ENCODE measurements at regions of chr11 and their contacts with region 1.

Region 1: DNA sequence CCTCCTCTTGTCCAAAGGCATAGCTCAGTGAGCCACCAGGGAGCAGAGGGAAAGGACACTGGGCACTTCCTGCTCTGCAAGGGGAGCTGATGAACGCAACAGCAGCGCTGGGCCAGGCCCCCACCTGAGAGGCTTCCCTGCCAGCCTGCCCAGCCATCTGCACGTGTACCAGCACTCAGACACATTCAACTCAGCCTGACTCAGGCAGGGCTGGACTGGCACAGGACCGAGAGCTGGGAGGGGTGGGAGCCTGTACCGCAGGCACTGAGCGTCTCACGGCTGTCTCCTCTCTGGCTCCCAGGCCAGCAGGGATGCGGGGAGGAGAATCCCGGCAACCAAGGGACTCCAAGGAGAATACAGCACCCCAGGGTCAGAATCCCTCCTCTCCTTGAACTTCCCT is 411.8 kb downstream of the CTTN start:
- DNase-seq: no peak
- ATAC-seq: no peak
- H3K4me3 ChIP-seq: no peak overlapping the region
- H3K4me3 Mint-ChIP-seq: no peak overlapping the region
- H3K27ac ChIP-seq: no peak overlapping the region
- H3K27ac Mint-ChIP-seq: no peak overlapping the region
- H3K4me1 ChIP-seq: no peaks in the 10 kb centered on the region
- H3K4me1 Mint-ChIP-seq: no peaks in the 10 kb centered on the region
- H3K27me3 ChIP-seq: no peaks in the 10 kb centered on the region
- H3K27me3 Mint-ChIP-seq: peaks cover 0 to 4% (median 0%) of the 10 kb centered on the region in 5 donors

Region 2: DNA sequence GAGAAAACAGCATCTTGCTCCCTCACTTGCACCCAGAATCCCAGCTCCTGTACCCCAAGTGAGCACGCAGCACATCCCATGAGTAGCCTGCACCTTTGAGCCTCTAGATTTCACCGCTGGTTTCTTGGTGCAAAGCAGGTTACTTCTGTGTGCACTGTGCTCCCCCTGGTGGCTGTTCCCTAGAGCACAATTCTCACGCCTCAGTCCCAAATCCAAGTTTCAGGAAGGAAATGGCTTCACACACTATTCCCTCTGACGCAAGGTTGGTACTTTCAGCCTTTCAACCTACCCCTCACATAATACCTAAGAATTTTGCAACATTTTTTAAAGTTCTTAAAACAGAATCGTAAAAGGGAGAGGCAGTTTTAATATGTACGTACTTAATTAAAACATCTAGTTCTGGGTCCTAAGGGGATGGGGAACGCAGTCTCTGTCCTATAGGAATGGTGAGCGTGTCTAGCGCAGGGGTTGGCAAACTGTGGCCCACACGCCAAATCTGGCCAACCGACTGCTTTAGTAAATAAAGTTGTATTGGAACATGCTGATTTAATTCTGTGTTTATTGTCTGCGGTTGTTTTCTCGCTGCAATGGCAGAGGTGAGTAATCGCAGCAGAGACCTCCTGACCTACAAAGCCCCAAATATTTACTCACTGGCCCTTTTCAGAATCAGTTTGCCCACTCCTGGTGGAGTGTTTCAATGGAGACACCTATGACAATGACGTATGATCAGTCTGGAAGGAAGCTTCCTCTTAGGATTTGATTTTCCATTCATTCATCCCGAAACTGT is 610.5 kb after region 1 on chr11:
- CTCF ChIA-PET with region 1: no interaction called
- POLR2A ChIA-PET with region 1: no interaction called
- intact Hi-C with region 1: loop called in 1 of 2 experiments (anchors 5 kb)
- DNase-seq: no peak
- ATAC-seq: no peak
- H3K4me3 ChIP-seq: no peak overlapping the region
- H3K4me3 Mint-ChIP-seq: no peak overlapping the region
- H3K27ac ChIP-seq: no peak overlapping the region
- H3K27ac Mint-ChIP-seq: no peak overlapping the region
- H3K4me1 ChIP-seq: no peaks in the 10 kb centered on the region
- H3K4me1 Mint-ChIP-seq: no peaks in the 10 kb centered on the region
- H3K27me3 ChIP-seq: no peaks in the 10 kb centered on the region
- H3K27me3 Mint-ChIP-seq: peaks cover 0 to 4% (median 0%) of the 10 kb centered on the region in 5 donors

Measured in naive thymus-derived CD4-positive, alpha-beta T cell (primary cell).